Esophagus squamous epithelium (tissue), 5 donors: ENCODE measurements at regions of chr9 and their contacts with region 1.

Region 1: GRCh38 chr9:124852829-124853531 is at the start of gene WDR38:
- DNase-seq: no peak
- H3K4me3 ChIP-seq: peak within 1 kb of the TSS; percentile 24 to 64 (median 52)
- H3K27ac ChIP-seq: peak within 1 kb of the TSS; percentile 17 to 75 (median 32)
- H3K4me1 ChIP-seq: peaks cover 15 to 43% (median 16%) of the 10 kb centered on the region in 3 donors
- H3K27me3 ChIP-seq: no peaks in the 10 kb centered on the region
- CTCF ChIP-seq: peak; percentile 97 to 99 (median 98)
- POLR2A ChIP-seq: no peak
- total RNA-seq, gene WDR38: not detected

Region 2: DNA sequence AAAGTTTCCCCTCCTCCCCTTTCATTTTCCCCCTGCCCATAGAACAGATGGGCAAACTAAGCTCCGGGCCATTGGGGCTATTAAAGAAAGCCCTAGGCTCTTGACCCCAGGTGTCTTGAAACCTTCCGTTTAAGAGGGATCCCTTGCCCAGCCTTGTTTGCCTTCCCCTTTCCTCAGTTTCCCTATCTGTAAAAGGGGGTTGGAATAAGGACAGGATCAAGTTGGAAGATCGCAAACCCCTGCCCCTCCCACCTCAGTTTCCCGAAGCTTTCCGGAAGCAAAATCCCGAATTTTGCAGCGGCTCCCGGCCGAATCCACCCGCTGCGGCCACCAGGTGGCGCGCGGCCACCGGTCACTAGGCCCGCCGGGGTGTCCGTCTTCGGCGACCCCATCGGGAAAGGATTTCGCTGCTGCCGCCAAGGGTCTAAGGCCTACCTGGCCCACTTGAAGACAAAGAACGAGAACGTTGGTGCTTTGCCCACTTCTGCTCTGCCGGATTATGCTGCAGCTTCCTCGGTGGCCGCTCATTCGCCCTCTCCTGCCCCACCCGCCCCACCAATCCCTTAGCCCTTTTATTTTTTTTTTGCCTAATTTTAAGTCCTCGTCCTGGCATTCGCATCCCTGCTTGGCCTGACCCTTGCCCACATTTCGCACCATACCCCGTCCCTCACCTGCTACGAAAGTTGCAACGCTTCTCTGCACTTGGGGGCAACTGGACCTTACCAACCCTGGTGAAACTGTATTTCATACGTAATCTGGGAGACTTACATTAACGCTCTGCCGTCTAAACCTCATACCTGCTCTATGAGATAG is 80.9 kb before region 1 on chr9:
- intact Hi-C with region 1: loop called (anchors 2 kb)
- DNase-seq: no peak
- H3K4me3 ChIP-seq: peak overlapping the region; percentile 81 to 99 (median 86)
- H3K27ac ChIP-seq: peak overlapping the region; percentile 59 to 91 (median 84)
- H3K4me1 ChIP-seq: peaks cover 15 to 57% (median 25%) of the 10 kb centered on the region in 3 donors
- H3K27me3 ChIP-seq: peaks cover 0 to 50% (median 2%) of the 10 kb centered on the region in 4 donors
- CTCF ChIP-seq: peak; percentile 90 to 97 (median 96)
- POLR2A ChIP-seq: no peak

Region 3: DNA sequence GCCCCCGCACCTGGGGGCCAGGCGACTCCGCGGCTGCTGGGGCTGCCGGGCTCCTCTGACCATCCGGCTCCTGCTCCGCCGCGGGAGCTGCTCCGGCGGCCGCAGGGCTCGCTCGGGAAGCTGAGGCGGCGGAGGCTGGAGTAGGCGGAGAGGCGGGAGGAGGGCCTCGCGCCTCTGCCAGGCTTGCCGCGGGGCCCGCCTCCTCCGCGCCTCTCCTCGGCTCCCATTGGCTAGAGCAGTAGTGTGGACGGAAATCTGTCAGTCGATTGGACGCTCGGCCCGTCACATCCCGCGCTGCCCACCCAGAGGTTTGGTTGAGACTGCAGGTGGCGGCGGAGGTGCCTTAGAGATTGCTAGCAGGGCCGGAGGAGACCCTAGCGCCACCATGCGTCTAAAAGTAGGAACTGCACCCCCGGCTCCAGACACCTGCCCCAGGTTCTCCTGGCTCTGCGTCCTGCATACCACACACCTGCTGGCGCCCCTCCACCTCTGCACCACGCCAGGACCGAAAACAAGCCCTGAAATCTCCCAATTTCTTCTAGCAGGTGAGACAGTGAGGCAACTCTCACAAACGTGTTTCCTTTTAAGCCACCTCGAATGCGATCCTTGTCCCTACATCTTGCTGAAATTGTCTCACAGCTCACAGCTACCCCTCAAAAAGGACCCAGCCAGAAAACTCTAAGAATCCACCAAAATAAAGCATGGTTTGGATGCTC is 290.6 kb after region 1 on chr9 and contains the start of gene SCAI:
- intact Hi-C with region 1: loop called (anchors 10 kb)
- DNase-seq: peak; percentile 96
- H3K4me3 ChIP-seq: peak within 1 kb of the TSS; percentile 59 to 94 (median 76)
- H3K27ac ChIP-seq: peak within 1 kb of the TSS; percentile 54 to 87 (median 67)
- H3K4me1 ChIP-seq: peaks cover 2 to 30% (median 9%) of the 10 kb centered on the region in 3 donors
- H3K27me3 ChIP-seq: no peaks in the 10 kb centered on the region
- CTCF ChIP-seq: peak; percentile 99 to 100 (median 99)
- POLR2A ChIP-seq: peak in 2 of 4 donors; percentile 26 to 57
- total RNA-seq, gene SCAI: 3.3 to 9.9 (median 5.3) TPM